ENCODE measurements at regions of chr5 and their contacts with region 1.

Region 1: GRCh38 chr5:159106569-159107282 is 7.0 kb upstream of the EBF1 start:
- DNase-seq: peak; percentile 80
- H3K27ac ChIP-seq: no peak overlapping the region
- CTCF ChIP-seq: peak; percentile 94

Region 2: DNA sequence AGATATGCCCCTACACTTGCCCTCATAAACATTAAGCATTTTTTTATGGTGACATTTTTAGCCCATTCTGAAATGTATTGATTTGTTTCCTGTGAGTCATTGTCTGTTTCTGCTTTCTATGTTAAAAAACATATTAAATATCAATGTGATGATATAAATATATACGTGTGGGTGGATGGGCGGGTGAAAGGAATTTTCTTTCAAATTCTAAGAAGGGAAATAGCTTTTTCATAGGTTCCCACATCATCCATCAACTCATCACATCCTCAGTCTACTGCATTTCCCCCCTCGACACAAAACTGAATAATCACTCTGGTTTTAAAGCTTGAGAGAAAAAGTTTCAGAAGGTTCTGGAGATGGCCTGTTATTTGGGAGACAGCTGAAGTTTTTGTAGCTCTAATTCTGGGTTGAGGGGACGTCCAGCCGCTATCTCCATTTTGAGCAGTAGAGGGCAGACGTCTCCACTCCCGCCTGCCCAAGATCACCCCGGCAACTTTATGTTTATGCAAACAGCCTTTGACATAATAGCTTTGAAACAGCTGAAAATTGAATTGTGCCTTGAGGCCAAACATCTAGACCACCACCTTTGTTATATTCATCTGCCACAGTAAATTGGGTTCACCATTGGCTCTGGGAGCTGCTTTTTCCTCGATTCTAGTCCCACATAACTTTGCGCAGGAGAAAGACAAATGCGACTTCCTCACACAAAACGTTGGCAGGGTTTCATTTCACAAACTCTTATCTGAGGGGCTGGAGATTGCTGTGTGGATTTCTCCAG is 1031.5 kb before region 1 on chr5:
- CTCF ChIA-PET with region 1: interaction called, 12 read pairs
- POLR2A ChIA-PET with region 1: no interaction called
- DNase-seq: peak; percentile 83
- H3K27ac ChIP-seq: no peak overlapping the region
- CTCF ChIP-seq: peak; percentile 94

Region 3: GRCh38 chr5:158174918-158175851 is 931.5 kb before region 1 on chr5:
- CTCF ChIA-PET with region 1: interaction called, 26 read pairs
- POLR2A ChIA-PET with region 1: no interaction called
- DNase-seq: peak; percentile 79
- H3K27ac ChIP-seq: no peak overlapping the region
- CTCF ChIP-seq: peak; percentile 73

Region 4: DNA sequence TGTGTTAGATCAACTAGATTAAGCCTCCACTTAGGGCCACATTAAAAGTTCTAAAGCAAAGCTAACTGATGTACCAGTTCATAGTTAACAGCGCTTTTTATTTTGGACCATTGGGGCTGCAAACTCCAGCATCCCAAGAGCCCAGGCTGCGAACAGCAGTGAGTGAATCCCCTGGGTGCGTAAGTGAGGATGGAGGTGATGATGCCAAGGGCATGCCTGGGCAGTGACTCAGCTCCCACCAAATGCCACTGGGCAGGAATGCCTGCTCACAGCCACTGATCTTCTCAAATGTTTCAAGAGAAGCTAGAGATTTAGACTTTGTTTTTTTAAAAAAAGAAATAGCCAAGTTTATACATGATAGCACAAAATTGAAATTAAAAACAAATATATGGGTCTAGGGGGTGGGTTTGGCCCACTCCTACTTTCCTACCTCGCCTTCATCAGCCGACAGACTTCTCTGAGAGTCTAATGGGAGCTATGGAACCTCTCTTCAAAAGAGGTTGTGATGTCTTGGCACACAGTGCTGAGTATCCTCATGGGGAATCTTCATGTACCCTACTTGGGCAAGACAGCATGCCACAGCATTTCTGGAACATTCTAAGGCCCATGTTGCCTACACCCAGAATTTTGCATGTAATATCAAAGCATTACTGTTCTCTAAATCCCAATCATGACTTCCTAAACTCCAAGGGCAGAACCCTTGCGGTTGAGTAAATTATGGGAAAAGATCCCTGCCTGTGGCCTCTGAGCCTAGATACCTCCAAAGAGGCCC is 405.1 kb before region 1 on chr5:
- CTCF ChIA-PET with region 1: interaction called, 142 read pairs
- POLR2A ChIA-PET with region 1: no interaction called
- DNase-seq: peak; percentile 65
- H3K27ac ChIP-seq: no peak overlapping the region
- CTCF ChIP-seq: no peak

Region 5: DNA sequence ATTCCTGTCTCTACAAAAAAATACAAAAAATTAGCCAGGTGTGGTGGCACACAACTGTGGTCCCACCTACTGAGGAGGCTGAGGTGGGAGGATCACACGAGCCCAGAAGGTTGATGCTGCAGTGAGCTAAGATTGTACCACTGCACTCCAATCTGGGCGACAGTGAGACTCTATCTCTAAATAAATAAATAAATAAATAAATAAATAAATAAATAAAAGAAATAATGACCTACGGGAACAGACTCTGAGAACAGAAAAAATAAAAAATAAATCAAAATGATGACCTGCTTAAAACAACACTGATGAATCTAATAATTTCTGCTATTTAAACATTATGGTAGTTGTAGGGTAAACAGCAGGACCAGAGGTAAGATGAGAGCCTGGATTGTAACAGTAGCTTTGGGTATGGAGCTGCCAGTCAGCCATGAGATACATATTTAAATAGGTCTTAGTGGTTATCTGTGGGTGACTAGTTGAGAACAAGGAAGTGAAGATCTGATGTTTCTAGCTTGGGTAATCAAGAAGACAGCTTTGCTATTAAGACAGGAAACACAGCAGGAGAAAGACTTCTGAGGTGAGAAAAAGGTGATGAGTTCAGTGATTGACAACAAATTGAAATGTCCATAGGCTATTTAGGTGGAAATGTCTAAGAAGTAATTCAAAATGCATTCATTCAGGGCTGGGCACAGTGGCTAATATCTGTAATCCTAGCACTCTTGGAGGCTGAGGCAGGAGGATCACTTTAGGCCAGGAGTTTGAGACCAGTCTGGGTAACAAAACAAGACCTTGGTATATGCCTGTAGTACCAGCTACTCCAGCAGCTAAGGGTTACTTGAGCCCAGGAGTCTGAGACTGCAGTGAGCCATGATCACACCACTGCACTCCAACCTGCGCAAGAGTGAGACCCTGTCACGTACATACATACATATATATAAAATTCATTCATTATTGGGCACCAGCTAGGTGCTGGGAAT is 91.6 kb after region 1 on chr5:
- CTCF ChIA-PET with region 1: no interaction called
- POLR2A ChIA-PET with region 1: no interaction called
- DNase-seq: no peak
- H3K27ac ChIP-seq: no peak overlapping the region
- CTCF ChIP-seq: no peak